AG04450 (cell line): ENCODE measurements at regions of chr2 and their contacts with region 1.

Region 1: GRCh38 chr2:96413323-96413722 is 77.8 kb downstream of the NCAPH start:
- DNase-seq: no peak
- H3K4me3 ChIP-seq: peak overlapping the region; percentile 35; the same call in 1 of the 2 replicates
- H3K27ac ChIP-seq: no peak overlapping the region
- H3K27me3 ChIP-seq: peaks cover 34% of the 10 kb centered on the region
- CTCF ChIP-seq: no peak

Region 2: GRCh38 chr2:96509114-96509846 is 96.0 kb after region 1 on chr2:
- CTCF ChIA-PET with region 1: interaction called, 140 read pairs
- POLR2A ChIA-PET with region 1: no interaction called
- DNase-seq: peak; percentile 55
- H3K4me3 ChIP-seq: no peak overlapping the region
- H3K27ac ChIP-seq: no peak overlapping the region
- H3K27me3 ChIP-seq: peaks cover 21% of the 10 kb centered on the region
- CTCF ChIP-seq: peak; percentile 96